ENCODE measurements at regions of chr16 and their contacts with region 1.

Region 1: DNA sequence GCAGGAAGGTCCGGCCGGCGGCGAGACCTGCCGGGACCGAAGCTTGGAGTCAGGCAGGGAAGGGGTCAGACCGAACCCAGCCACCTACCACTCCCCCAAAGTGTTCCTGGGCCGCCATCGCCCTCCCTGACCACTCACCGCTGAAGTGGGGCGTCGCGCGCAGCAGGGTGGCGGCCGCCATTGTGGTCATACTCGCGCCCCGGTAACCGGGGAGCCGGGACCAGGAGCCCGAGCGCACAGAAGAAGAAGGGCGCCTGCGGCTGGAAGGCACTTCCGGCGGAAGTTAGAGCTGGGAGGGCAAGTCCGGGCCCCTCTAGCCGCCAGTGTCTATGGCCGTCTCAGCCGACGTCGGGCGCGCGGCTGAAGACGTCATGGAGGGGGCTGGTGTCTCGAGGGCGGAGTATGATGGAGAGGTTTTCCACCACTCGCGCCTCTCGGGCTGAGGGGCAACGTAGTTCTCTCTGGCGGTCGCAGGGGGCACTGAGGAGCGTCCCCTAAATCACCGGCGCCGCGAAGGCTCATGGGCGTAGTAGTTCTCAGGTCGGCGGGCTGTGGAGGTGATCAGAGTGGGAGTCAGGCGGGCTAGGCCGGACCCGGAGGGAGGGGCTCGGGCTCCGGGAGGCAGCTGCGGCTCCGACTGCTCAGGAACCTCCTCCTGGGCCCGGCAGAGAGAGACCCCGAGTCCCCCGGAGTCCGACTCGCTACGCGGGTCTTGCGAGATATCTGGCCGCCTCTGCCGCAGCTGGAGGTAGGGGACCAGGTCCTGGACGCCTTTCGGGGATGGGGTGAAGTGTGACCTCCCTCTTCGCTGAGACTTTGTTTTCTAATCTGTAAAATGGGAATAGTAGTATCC is at the start of gene TUFM:
- DNase-seq: peak; percentile 99
- ATAC-seq: peak; percentile 97 to 99 (median 98)
- H3K4me3 ChIP-seq: peak within 1 kb of the TSS; percentile 63 to 100 (median 85)
- H3K27ac ChIP-seq: peak within 1 kb of the TSS; percentile 73 to 96 (median 90)
- H3K4me1 ChIP-seq: peaks cover 0 to 25% (median 18%) of the 10 kb centered on the region in 12 donors
- H3K27me3 ChIP-seq: no peaks in the 10 kb centered on the region
- CTCF ChIP-seq: peak; percentile 57 to 92 (median 69)
- POLR2A ChIP-seq: peak in 1 of 2 donors; percentile 76
- total RNA-seq, gene TUFM: 179 to 250 (median 225) TPM

Region 2: DNA sequence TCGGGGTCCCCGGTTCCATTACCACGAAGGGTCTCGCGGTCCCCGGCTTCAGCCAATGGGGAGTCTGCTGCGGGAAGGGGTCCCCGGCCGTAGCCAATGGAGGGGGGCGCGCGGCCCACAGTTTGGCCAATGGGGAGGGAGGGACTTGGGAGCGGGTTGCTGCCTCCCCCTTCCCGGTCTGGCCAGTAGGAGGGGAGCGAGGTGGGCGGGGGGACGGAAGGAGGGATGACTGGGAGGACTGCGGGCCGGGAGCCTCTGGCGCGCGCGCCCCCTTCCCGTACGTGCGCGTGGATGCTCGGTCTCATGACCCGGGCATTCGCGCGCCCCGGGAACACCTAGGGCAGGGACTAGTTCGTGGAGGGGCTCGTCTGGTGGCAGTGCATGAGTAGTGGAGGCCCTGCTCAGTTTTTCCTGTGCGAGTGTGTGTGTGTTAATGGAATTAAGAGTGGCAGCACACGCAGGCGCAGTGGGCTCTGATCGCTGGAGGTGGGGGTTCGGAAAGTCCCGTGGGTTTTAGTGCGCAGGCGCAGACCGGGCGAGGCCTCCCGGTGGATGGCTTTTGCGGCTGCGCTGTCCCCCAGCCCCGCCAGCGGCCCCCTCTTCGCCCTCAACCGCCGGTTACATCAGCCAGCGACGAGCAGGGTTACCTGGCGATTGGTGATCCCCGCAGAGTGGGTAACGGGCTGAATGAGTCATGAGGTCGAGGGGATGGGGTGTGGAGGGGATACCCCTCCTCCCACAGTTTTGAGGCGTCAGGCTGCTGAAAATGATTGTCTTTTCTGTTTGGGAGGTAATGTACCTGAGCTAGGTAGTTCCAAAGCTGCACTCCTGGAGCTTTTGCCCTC is 22.2 kb before region 1 on chr16:
- intact Hi-C with region 1: loop called in 6 of 10 experiments (anchors 1 to 2 kb)
- DNase-seq: peak; percentile 98 to 99 (median 98)
- ATAC-seq: peak; percentile 92 to 97 (median 96)
- H3K4me3 ChIP-seq: peak overlapping the region; percentile 72 to 100 (median 99)
- H3K27ac ChIP-seq: peak overlapping the region; percentile 90 to 100 (median 99)
- H3K4me1 ChIP-seq: peaks cover 0 to 33% (median 21%) of the 10 kb centered on the region in 12 donors
- H3K27me3 ChIP-seq: no peaks in the 10 kb centered on the region
- CTCF ChIP-seq: peak in 11 of 12 donors; percentile 6 to 51 (median 31)
- POLR2A ChIP-seq: peak in 1 of 2 donors; percentile 53

Region 3: GRCh38 chr16:28863929-28864793 is 17.9 kb after region 1 on chr16:
- intact Hi-C with region 1: loop called in 8 of 10 experiments (anchors 1 to 2 kb)
- DNase-seq: peak in 2 of 5 donors; percentile 35 to 39
- ATAC-seq: peak in 2 of 4 donors; percentile 13 to 27
- H3K4me3 ChIP-seq: peak overlapping the region; percentile 68 to 100 (median 92)
- H3K27ac ChIP-seq: peak overlapping the region; percentile 91 to 99 (median 98)
- H3K4me1 ChIP-seq: peaks cover 0 to 32% (median 19%) of the 10 kb centered on the region in 12 donors
- H3K27me3 ChIP-seq: no peaks in the 10 kb centered on the region
- CTCF ChIP-seq: no peak
- POLR2A ChIP-seq: no peak

Region 4: GRCh38 chr16:28915181-28915580 is 68.9 kb after region 1 on chr16:
- intact Hi-C with region 1: no loop called
- DNase-seq: no peak
- ATAC-seq: no peak
- H3K4me3 ChIP-seq: no peak overlapping the region
- H3K27ac ChIP-seq: no peak overlapping the region
- H3K4me1 ChIP-seq: no peaks in the 10 kb centered on the region
- H3K27me3 ChIP-seq: no peaks in the 10 kb centered on the region
- CTCF ChIP-seq: no peak
- POLR2A ChIP-seq: no peak

Region 5: GRCh38 chr16:28943281-28943680 is 97.0 kb after region 1 on chr16:
- intact Hi-C with region 1: loop called in 2 of 10 experiments (anchors 1 to 5 kb)
- DNase-seq: no peak
- ATAC-seq: no peak
- H3K4me3 ChIP-seq: no peak overlapping the region
- H3K27ac ChIP-seq: no peak overlapping the region
- H3K4me1 ChIP-seq: peaks cover 0 to 14% (median 6%) of the 10 kb centered on the region in 12 donors
- H3K27me3 ChIP-seq: no peaks in the 10 kb centered on the region
- CTCF ChIP-seq: no peak
- POLR2A ChIP-seq: no peak

Region 6: GRCh38 chr16:28950648-28951409 is 104.5 kb after region 1 on chr16 and contains the start of gene NFATC2IP:
- intact Hi-C with region 1: loop called in 1 of 10 experiments (anchors 2 kb)
- DNase-seq: peak; percentile 100
- ATAC-seq: peak; percentile 98 to 100 (median 99)
- H3K4me3 ChIP-seq: peak within 1 kb of the TSS; percentile 77 to 100 (median 90)
- H3K27ac ChIP-seq: peak within 1 kb of the TSS; percentile 79 to 94 (median 84)
- H3K4me1 ChIP-seq: peaks cover 0 to 24% (median 12%) of the 10 kb centered on the region in 12 donors
- H3K27me3 ChIP-seq: no peaks in the 10 kb centered on the region
- CTCF ChIP-seq: no peak
- POLR2A ChIP-seq: peak in 1 of 2 donors; percentile 41
- total RNA-seq, gene NFATC2IP: 11.1 to 25.3 (median 19.5) TPM

Region 7: GRCh38 chr16:28964072-28964471 is 117.8 kb after region 1 on chr16:
- intact Hi-C with region 1: no loop called
- DNase-seq: no peak
- ATAC-seq: no peak
- H3K4me3 ChIP-seq: no peak overlapping the region
- H3K27ac ChIP-seq: no peak overlapping the region
- H3K4me1 ChIP-seq: no peaks in the 10 kb centered on the region
- H3K27me3 ChIP-seq: no peaks in the 10 kb centered on the region
- CTCF ChIP-seq: no peak
- POLR2A ChIP-seq: no peak

Region 8: GRCh38 chr16:28974437-28975157 is 128.3 kb after region 1 on chr16 and contains the start of gene SPNS1:
- intact Hi-C with region 1: loop called in 1 of 10 experiments (anchors 1 kb)
- DNase-seq: peak; percentile 97 to 99 (median 98)
- ATAC-seq: peak; percentile 95 to 99 (median 98)
- H3K4me3 ChIP-seq: peak within 1 kb of the TSS; percentile 67 to 98 (median 88)
- H3K27ac ChIP-seq: peak within 1 kb of the TSS in 11 of 12 donors; percentile 75 to 91 (median 81)
- H3K4me1 ChIP-seq: peaks cover 0 to 24% (median 13%) of the 10 kb centered on the region in 12 donors
- H3K27me3 ChIP-seq: no peaks in the 10 kb centered on the region
- CTCF ChIP-seq: no peak
- POLR2A ChIP-seq: peak in 1 of 2 donors; percentile 64
- total RNA-seq, gene SPNS1: 13.4 to 33.0 (median 16.6) TPM